ENCODE measurements at regions of chr15 and their contacts with region 1.

Region 1: DNA sequence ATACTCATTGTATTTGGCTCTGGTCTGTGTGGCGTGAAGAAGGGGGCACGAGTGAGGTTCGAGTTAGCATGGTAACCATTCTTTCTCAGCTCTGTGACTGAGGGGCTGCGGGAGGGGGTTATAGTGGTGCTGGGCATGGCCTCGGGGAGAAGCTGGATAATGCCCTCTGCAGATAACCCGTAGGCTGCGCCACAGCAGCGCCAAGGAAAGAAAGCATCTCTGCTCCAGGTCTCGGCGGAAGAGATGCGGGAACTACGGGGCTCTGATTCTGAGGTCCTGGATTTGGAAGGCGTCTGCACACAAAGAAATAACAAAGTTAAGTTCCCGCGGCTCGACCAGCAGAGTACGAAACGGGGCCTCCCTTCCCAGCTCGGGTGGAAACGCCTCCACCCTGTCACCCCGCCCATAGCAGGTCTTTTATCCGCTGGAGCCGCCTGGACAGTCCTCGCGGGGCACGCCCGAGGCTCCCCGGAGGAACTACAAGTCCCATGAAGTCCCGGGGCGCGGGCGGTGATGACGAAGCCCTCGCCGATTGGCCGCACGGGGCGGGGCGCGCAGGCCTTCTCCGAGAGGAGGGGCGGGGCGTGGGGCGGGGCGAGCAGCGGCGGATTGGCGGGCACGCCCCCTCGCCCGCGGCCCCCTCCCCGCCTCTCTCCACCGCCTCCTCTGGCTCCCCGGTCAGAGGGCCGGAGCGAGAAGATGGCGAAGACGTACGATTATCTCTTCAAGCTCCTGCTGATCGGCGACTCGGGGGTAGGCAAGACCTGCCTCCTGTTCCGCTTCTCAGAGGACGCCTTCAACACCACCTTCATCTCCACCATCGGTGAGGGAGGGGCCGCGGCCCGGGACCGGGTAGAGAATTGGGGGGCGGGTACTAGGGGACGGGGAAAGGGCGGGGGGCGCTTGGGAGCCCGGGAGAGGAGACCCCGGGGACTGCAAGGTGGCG is at the start of gene RAB8B:
- DNase-seq: peak; percentile 82 to 97
- H3K4me3 ChIP-seq: peak within 1 kb of the TSS; percentile 63
- H3K27ac ChIP-seq: no peak within 1 kb of the TSS
- H3K4me1 ChIP-seq: peaks cover 36% of the 10 kb centered on the region
- H3K27me3 ChIP-seq: no peaks in the 10 kb centered on the region
- CTCF ChIP-seq: no peak
- total RNA-seq, gene RAB8B: 19.3 and 20.9 TPM in 2 replicates

Region 2: DNA sequence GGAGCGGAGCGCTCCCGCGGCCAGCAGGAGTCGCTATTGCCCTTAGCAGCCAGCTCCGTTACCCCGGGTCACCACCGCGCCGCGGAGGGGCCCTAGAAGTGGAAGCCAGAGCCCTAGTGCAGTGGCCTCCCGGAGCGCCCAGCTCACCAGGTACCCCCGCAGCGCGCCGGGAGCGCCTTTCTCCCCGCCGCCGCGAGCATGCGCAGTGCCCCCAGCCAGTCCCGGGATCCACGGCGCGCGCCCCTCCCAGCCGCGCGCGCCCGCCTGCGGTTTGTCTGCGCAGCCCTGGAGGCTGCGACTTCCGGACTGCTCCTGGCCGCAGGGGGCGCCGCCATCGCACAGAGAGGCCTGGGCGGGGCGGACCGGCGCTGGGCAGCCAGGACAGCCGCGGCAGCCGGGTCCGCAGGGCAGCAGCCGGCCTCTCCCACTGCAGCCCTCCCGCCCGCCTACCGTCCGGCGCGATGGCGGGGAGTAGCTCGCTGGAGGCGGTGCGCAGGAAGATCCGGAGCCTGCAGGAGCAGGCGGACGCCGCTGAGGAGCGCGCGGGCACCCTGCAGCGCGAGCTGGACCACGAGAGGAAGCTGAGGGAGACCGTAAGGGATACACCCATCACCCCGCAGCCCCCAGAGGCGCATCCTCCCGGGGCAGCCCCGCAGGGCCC is 141.0 kb before region 1 on chr15:
- CTCF ChIA-PET with region 1: no interaction called
- POLR2A ChIA-PET with region 1: no interaction called
- intact Hi-C with region 1: no loop called
- DNase-seq: peak; percentile 79 to 93
- H3K4me3 ChIP-seq: peak overlapping the region; percentile 80
- H3K27ac ChIP-seq: peak overlapping the region; percentile 68
- H3K4me1 ChIP-seq: peaks cover 50% of the 10 kb centered on the region
- H3K27me3 ChIP-seq: no peaks in the 10 kb centered on the region
- CTCF ChIP-seq: peak; percentile 80

Region 3: DNA sequence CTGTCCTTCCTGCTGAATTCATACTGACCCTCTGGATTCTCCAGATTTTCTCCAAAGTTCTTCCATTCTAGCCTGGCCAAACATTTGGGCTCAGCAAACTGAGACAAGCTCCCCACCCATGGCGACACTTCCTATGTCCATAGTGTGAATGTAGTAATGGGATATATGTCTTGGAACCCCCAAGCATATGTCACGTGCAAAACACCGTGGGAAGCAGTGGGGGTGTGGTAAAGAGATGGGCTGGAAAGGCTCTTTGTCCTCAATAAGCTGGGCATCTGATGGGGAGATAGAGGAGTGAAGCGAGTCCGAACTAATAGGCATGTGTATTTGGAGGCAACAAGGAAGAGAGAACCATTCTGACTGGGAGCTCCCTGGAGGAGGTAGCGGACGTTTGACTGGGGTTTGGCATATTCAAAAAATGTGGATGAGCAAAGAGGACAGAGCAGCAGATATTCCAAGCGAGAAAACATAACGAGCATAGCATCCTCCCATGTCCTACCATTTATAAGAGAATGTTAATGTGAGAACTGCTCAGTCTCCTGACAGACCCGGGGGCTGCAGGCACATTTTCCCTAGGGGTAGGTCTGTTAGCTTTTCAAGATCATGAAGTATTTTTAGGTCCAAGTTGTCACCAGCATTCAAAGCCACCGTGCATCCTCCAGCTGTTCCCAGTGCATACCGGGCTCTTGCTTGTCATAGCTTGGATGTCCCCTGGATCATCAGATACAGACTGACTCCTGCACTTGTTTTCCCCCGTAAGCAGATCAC is 121.0 kb before region 1 on chr15:
- CTCF ChIA-PET with region 1: no interaction called
- POLR2A ChIA-PET with region 1: interaction called, 14 read pairs
- intact Hi-C with region 1: no loop called
- DNase-seq: no peak
- H3K4me3 ChIP-seq: no peak overlapping the region
- H3K27ac ChIP-seq: no peak overlapping the region
- H3K4me1 ChIP-seq: no peaks in the 10 kb centered on the region
- H3K27me3 ChIP-seq: no peaks in the 10 kb centered on the region
- CTCF ChIP-seq: no peak

Region 4: DNA sequence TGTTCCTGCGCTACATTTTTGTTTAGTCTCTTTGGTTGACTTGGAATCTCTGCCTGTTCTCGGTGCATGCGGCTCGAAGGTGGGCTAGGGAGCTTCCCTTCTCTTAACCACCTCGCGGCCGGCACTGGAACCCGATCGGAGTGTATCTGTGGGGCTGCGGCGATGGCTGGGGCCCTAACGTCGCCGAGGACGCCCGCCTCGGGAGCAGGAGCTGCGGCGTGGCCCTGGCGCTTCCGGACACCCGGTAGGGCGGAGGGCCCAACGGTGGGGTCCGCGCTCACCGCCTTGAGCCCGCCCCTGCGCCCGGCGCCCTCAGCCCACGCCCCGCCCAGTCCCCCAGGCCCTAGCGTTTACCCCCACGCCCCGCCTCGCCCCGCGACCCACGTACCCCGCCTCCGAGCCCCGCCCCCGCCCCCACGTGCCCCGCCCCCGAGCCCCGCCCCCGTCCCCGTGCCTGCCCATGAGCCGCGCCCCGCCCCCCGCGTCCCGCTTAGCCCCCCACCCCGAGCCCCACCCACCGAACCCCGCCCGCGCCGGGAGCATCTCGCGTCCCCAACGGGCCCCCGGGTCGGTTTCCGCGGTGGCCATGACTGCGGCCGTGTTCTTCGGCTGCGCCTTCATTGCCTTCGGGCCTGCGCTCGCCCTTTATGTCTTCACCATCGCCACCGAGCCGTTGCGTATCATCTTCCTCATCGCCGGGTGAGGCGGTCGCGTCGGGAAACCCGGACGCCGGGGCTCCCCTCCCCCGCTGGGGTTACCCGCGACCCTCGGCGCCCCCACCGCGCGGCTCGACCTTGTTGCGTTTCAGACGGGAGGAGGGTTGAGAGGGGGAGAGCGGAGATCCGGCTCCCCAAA is 88.1 kb after region 1 on chr15 and contains the start of gene APH1B:
- CTCF ChIA-PET with region 1: interaction called, 6 read pairs
- POLR2A ChIA-PET with region 1: no interaction called
- intact Hi-C with region 1: loop called (anchors 2 kb)
- DNase-seq: peak; percentile 40 to 76
- H3K4me3 ChIP-seq: peak within 1 kb of the TSS; percentile 82
- H3K27ac ChIP-seq: no peak within 1 kb of the TSS
- H3K4me1 ChIP-seq: peaks cover 16% of the 10 kb centered on the region
- H3K27me3 ChIP-seq: no peaks in the 10 kb centered on the region
- CTCF ChIP-seq: no peak
- total RNA-seq, gene APH1B: 4.9 and 5.8 TPM in 2 replicates

Region 5: DNA sequence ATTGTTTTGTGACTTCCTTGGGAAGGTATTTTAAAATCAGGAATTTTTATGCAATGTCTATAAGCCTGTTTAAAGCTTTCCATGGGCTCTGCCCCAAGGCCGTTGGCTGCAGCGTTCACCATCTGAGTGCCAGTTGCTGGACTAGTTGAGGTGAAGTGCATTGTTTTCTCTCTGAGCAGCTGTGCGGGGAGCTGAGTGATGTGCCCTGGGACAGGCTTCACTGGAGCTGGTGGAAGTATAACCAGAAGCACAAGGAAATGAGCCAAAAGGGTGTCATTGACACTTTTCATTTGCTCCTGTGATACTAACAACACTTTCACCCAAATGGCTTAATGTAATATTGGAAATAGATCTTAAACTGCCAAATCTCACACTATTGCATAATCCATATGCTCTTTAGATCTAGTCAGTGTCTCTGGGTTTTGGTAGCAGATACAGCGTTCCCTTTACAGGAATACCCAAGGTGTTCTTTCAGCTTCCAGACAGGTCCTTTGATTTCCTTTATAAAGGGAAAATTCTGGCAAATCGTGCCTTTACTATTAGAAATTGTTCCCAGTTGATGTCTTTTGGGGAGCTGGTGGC is 117.4 kb after region 1 on chr15:
- CTCF ChIA-PET with region 1: interaction called, 10 read pairs
- POLR2A ChIA-PET with region 1: no interaction called
- intact Hi-C with region 1: no loop called
- DNase-seq: no peak
- H3K4me3 ChIP-seq: no peak overlapping the region
- H3K27ac ChIP-seq: no peak overlapping the region
- H3K4me1 ChIP-seq: no peaks in the 10 kb centered on the region
- H3K27me3 ChIP-seq: no peaks in the 10 kb centered on the region
- CTCF ChIP-seq: no peak